ENCODE measurements at regions of chr4 and their contacts with region 1.

Region 1: DNA sequence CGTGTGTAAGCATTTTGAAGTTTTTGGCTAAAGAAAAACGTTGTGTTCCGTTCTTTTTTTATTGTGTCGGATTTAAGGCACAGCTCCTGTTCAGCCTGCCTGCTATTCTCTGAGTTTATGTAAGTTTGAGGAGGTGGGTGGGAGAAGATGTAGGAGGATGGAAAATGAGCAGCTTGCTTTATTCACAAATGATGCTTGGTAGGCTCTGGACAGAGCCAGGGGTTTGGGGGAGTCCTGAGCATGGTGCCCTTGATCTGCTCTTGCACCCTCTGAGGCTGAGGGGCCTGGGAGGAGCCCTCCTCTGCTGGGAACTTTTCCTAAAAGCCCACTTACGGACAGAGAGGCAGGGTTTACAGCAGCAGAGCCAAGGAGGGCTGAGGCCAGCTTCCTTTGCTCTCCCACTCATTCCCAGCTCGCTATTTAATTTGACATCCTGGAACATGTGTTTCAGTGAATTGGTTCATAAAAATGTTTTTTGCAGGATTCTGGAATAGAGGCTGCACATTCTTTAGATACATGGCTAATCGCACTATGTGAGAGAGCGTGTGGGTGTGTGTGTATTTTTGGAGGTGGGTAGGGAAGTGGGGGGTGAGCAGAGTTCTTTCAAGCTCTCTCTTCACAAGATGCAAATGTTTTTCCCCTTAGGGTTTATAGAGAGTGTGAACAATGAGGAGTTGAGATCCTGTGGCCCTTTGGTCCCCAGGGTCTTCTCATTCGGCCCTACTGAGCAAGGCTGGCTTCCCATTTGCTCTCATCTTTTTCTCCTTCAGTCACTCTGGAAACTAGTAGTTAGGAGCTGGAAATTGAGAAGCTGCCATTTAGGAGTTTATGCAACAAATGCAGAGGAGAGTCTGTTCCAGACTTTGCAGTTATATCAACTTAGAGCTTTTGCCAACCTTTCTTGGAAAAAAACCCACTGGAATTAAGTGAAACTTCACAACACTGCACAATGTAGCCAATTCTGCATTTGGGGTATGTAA is 32.1 kb downstream of the TMEM131L start:
- DNase-seq: no peak
- H3K4me3 ChIP-seq: no peak overlapping the region
- H3K27ac ChIP-seq: no peak overlapping the region
- H3K4me1 ChIP-seq: peaks cover 54% of the 10 kb centered on the region
- H3K27me3 ChIP-seq: no peaks in the 10 kb centered on the region
- CTCF ChIP-seq: no peak

Region 2: DNA sequence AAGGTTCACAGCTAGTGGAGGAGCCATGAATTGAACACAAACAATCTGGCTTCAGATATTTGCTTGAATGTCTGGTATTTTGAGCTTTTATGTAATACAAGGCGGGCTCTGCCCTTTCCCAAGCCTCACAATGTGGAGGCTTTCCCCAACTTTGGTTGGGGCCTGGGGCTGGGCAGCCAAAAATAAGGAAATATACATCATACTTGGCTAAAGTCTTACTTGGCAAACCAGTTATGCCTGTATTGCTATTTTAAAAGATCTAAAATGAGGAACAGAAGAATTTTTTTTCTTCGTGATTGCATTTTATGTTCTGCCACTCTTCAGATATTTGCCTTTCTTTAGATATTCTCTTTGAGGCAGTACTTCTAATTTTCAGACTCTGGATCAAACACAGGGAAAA is 692.5 kb before region 1 on chr4:
- CTCF ChIA-PET with region 1: interaction called, 13 read pairs
- dilution Hi-C with region 1: no loop called
- in situ Hi-C with region 1: no loop called
- intact Hi-C with region 1: no loop called
- DNase-seq: no peak
- H3K4me3 ChIP-seq: no peak overlapping the region
- H3K27ac ChIP-seq: no peak overlapping the region
- H3K4me1 ChIP-seq: peaks cover 4% of the 10 kb centered on the region
- H3K27me3 ChIP-seq: no peaks in the 10 kb centered on the region
- CTCF ChIP-seq: no peak

Region 3: GRCh38 chr4:153962311-153963039 is 464.2 kb after region 1 on chr4:
- CTCF ChIA-PET with region 1: no interaction called
- dilution Hi-C with region 1: no loop called
- in situ Hi-C with region 1: no loop called
- intact Hi-C with region 1: no loop called
- DNase-seq: no peak
- H3K4me3 ChIP-seq: no peak overlapping the region
- H3K27ac ChIP-seq: no peak overlapping the region
- H3K4me1 ChIP-seq: no peaks in the 10 kb centered on the region
- H3K27me3 ChIP-seq: peaks cover 2% of the 10 kb centered on the region
- CTCF ChIP-seq: no peak